ENCODE measurements at regions of chr15 and their contacts with region 1.

Region 1: DNA sequence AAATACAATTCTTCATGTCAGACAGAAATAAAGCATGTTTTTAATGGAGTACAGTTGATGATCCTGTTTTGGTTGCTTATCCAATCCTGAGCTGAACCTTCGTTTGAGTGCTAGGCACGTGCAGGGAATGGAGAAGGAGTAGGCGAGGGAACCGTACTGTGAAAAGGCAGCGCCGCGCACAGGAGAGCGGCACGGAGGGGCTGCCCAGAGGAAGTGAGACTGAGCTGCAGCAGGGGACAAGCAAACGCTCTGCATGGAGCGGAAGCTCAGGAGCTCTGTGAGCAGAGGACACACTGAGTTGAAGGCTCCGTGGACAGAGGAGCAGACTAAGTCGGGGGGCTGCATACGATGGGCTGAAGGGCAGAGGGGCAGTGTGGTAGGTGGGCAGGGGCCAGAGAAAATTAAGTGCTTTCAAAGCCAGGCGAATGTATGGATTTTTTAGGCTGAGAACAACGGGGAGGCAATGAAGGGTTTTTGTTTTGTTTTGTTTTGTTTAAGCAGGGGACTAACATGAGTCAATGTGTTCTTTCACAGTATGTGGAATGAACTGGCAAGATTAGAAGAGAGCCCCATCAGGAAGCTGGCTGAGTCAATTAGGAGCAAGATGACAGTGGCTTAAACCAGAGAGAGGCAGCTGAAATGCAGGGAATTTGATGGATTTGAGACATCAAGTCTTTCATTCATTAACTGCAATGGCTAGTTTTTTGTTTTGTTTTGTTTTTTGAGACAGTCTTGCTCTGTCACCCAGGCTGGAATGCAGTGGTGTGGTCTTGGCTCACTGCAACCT is 23.8 kb upstream of the TM2D3 start:
- H3K4me3 ChIP-seq: no peak overlapping the region
- H3K27ac ChIP-seq: no peak overlapping the region
- H3K4me1 ChIP-seq: no peaks in the 10 kb centered on the region
- CTCF ChIP-seq: no peak

Region 2: DNA sequence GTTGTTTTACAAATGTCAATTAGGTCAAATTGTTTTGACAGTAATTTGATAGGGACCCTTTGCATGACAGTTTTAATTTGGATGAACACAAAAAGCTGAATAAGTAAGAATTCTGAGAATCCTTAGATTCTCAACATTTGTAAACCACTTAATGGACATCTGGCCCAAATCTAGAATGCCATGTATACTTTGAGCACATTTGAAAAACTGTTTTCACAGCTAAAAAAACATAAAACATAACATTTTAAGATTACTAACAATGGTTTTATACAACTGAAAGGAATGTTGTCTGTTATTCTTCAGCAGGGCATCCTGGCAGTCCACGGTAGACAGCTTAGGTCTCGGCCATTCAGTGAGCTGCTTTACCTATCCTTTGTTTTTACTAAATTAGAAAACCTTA is 10.7 kb after region 1 on chr15:
- CTCF ChIA-PET with region 1: interaction called, 14 read pairs
- POLR2A ChIA-PET with region 1: no interaction called
- H3K4me3 ChIP-seq: no peak overlapping the region
- H3K27ac ChIP-seq: no peak overlapping the region
- H3K4me1 ChIP-seq: no peaks in the 10 kb centered on the region
- CTCF ChIP-seq: no peak

Region 3: GRCh38 chr15:101803676-101804075 is 127.7 kb after region 1 on chr15:
- CTCF ChIA-PET with region 1: no interaction called
- POLR2A ChIA-PET with region 1: no interaction called
- H3K4me3 ChIP-seq: no peak overlapping the region
- H3K27ac ChIP-seq: no peak overlapping the region
- H3K4me1 ChIP-seq: no peaks in the 10 kb centered on the region
- CTCF ChIP-seq: no peak